Naive thymus-derived CD4-positive, alpha-beta T cell (primary cell): ENCODE measurements at regions of chr17 and their contacts with region 1.

Region 1: GRCh38 chr17:80575057-80575875 is 30.6 kb downstream of the RPTOR start:
- DNase-seq: peak; percentile 72 to 89 (median 83)
- ATAC-seq: peak; percentile 100
- H3K4me3 ChIP-seq: no peak overlapping the region
- H3K4me3 Mint-ChIP-seq: peak overlapping the region in 2 of 10 donors; percentile 10 to 36
- H3K27ac ChIP-seq: no peak overlapping the region
- H3K27ac Mint-ChIP-seq: peak overlapping the region in 4 of 9 donors; percentile 12 to 31 (median 13)
- H3K4me1 ChIP-seq: no peaks in the 10 kb centered on the region
- H3K4me1 Mint-ChIP-seq: peaks cover 11 to 46% (median 30%) of the 10 kb centered on the region in 7 donors
- H3K27me3 ChIP-seq: no peaks in the 10 kb centered on the region
- H3K27me3 Mint-ChIP-seq: no peaks in the 10 kb centered on the region

Region 2: GRCh38 chr17:80477647-80478478 is 97.4 kb before region 1 on chr17:
- CTCF ChIA-PET with region 1: no interaction called
- POLR2A ChIA-PET with region 1: no interaction called
- intact Hi-C with region 1: loop called (anchors 10 kb)
- DNase-seq: peak in 6 of 9 donors; percentile 29 to 58 (median 42)
- ATAC-seq: peak; percentile 31
- H3K4me3 ChIP-seq: no peak overlapping the region
- H3K4me3 Mint-ChIP-seq: peak overlapping the region in 1 of 10 donors; percentile 76
- H3K27ac ChIP-seq: no peak overlapping the region
- H3K27ac Mint-ChIP-seq: no peak overlapping the region
- H3K4me1 ChIP-seq: peaks cover 8 to 15% of the 10 kb centered on the region in 2 donors
- H3K4me1 Mint-ChIP-seq: peaks cover 8 to 24% (median 21%) of the 10 kb centered on the region in 7 donors
- H3K27me3 ChIP-seq: peaks cover 0 to 20% of the 10 kb centered on the region in 2 donors
- H3K27me3 Mint-ChIP-seq: peaks cover 46 to 58% (median 53%) of the 10 kb centered on the region in 5 donors

Region 3: DNA sequence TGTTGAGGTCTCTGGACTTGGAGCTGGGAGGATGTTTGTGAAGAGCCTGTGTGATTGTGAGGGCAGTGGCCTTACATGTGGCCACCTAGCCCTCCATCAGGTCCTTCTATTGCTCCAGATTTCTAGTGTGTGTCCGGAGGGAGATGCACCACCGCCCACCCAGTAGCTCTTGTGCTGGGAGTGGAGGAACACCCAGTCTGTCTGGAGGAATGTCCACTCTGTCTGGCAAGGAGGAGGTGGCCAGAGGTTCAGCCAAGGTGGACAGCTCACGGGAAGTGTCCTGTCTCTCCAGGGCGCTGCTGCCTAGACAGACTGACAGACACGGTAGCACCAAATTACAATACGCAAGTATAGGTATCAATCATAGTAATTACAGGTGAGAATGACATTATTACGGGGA is 20.0 kb before region 1 on chr17:
- CTCF ChIA-PET with region 1: no interaction called
- POLR2A ChIA-PET with region 1: no interaction called
- intact Hi-C with region 1: no loop called
- DNase-seq: no peak
- ATAC-seq: no peak
- H3K4me3 ChIP-seq: no peak overlapping the region
- H3K4me3 Mint-ChIP-seq: no peak overlapping the region
- H3K27ac ChIP-seq: no peak overlapping the region
- H3K27ac Mint-ChIP-seq: no peak overlapping the region
- H3K4me1 ChIP-seq: no peaks in the 10 kb centered on the region
- H3K4me1 Mint-ChIP-seq: peaks cover 15 to 32% (median 24%) of the 10 kb centered on the region in 7 donors
- H3K27me3 ChIP-seq: no peaks in the 10 kb centered on the region
- H3K27me3 Mint-ChIP-seq: no peaks in the 10 kb centered on the region

Region 4: GRCh38 chr17:80605326-80606066 is 30.2 kb after region 1 on chr17:
- CTCF ChIA-PET with region 1: interaction called, 12 read pairs
- POLR2A ChIA-PET with region 1: no interaction called
- intact Hi-C with region 1: no loop called
- DNase-seq: peak in 1 of 9 donors; percentile 58
- ATAC-seq: peak; percentile 46
- H3K4me3 ChIP-seq: no peak overlapping the region
- H3K4me3 Mint-ChIP-seq: peak overlapping the region in 2 of 10 donors; percentile 11 to 27
- H3K27ac ChIP-seq: no peak overlapping the region
- H3K27ac Mint-ChIP-seq: peak overlapping the region in 6 of 9 donors; percentile 3 to 74 (median 57)
- H3K4me1 ChIP-seq: peaks cover 10 to 24% of the 10 kb centered on the region in 2 donors
- H3K4me1 Mint-ChIP-seq: peaks cover 43 to 81% (median 68%) of the 10 kb centered on the region in 7 donors
- H3K27me3 ChIP-seq: no peaks in the 10 kb centered on the region
- H3K27me3 Mint-ChIP-seq: no peaks in the 10 kb centered on the region

Region 5: GRCh38 chr17:80732268-80732667 is 157.0 kb after region 1 on chr17:
- CTCF ChIA-PET with region 1: interaction called, 4 read pairs
- POLR2A ChIA-PET with region 1: no interaction called
- intact Hi-C with region 1: loop called in 1 of 2 experiments (anchors 5 kb)
- DNase-seq: no peak
- ATAC-seq: no peak
- H3K4me3 ChIP-seq: no peak overlapping the region
- H3K4me3 Mint-ChIP-seq: peak overlapping the region in 2 of 10 donors; percentile 25
- H3K27ac ChIP-seq: no peak overlapping the region
- H3K27ac Mint-ChIP-seq: peak overlapping the region in 6 of 9 donors; percentile 15 to 96 (median 66)
- H3K4me1 ChIP-seq: peaks cover 7 to 15% of the 10 kb centered on the region in 2 donors
- H3K4me1 Mint-ChIP-seq: peaks cover 11 to 88% (median 73%) of the 10 kb centered on the region in 7 donors
- H3K27me3 ChIP-seq: no peaks in the 10 kb centered on the region
- H3K27me3 Mint-ChIP-seq: no peaks in the 10 kb centered on the region

Region 6: DNA sequence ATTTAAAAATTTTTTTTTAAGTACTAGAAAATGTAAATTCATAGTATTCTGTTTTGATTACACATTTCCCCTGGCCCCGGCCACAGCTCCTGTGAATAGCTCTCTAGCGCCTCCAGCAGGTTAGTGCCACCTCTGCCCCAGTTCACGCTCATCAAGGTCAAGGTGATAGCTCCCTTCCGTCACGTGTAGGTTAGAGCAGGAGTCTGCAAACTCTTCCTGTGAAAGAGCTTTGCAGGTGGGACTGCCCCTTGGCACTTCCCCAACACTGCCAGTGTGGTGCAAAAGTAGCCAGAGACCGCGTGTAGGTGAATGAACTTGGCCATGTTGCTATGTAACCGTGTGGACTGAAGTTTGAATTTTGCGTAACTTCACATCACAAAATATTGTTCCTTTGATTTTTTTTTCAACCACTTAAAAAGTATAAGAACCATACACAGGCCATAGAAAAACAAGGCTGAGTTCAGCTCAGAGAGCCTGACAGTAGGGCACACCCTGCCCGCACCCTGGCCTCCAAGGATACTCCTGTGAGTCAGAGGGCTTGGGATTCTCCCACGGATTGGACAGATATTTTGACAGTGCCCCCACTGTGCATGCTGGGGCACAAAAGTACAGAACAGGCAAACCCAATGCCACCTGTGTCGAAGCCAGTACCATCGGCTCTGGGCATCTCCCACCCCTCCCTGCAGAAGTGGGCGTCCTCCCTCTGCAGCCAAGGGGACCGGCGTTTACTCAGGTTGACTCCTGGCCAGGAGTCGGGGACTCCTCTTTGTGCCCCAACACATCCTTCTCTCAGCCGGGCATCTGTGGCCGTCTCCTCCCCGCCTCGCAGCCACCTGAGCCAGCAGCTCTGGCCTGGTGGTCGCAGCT is 324.4 kb after region 1 on chr17:
- CTCF ChIA-PET with region 1: no interaction called
- POLR2A ChIA-PET with region 1: no interaction called
- intact Hi-C with region 1: loop called in 1 of 2 experiments (anchors 1 kb)
- DNase-seq: peak; percentile 54 to 81 (median 76)
- ATAC-seq: peak; percentile 91
- H3K4me3 ChIP-seq: no peak overlapping the region
- H3K4me3 Mint-ChIP-seq: peak overlapping the region in 1 of 10 donors; percentile 25
- H3K27ac ChIP-seq: no peak overlapping the region
- H3K27ac Mint-ChIP-seq: peak overlapping the region in 4 of 9 donors; percentile 7 to 38 (median 26)
- H3K4me1 ChIP-seq: peaks cover 4 to 6% of the 10 kb centered on the region in 2 donors
- H3K4me1 Mint-ChIP-seq: peaks cover 5 to 63% (median 10%) of the 10 kb centered on the region in 7 donors
- H3K27me3 ChIP-seq: no peaks in the 10 kb centered on the region
- H3K27me3 Mint-ChIP-seq: no peaks in the 10 kb centered on the region

Region 7: GRCh38 chr17:80981062-80981902 is 406.0 kb after region 1 on chr17:
- CTCF ChIA-PET with region 1: no interaction called
- POLR2A ChIA-PET with region 1: no interaction called
- intact Hi-C with region 1: loop called in 1 of 2 experiments (anchors 10 kb)
- DNase-seq: peak in 7 of 9 donors; percentile 28 to 64 (median 50)
- ATAC-seq: peak; percentile 64
- H3K4me3 ChIP-seq: no peak overlapping the region
- H3K4me3 Mint-ChIP-seq: peak overlapping the region in 7 of 10 donors; percentile 22 to 75 (median 61)
- H3K27ac ChIP-seq: no peak overlapping the region
- H3K27ac Mint-ChIP-seq: peak overlapping the region in 2 of 9 donors; percentile 33 to 66
- H3K4me1 ChIP-seq: no peaks in the 10 kb centered on the region
- H3K4me1 Mint-ChIP-seq: peaks cover 8 to 12% (median 10%) of the 10 kb centered on the region in 7 donors
- H3K27me3 ChIP-seq: no peaks in the 10 kb centered on the region
- H3K27me3 Mint-ChIP-seq: peaks cover 8 to 22% (median 10%) of the 10 kb centered on the region in 5 donors